PC-3 (cell line): ENCODE measurements at regions of chr9 and their contacts with region 1.

Region 1: GRCh38 chr9:5510360-5510931 is at the start of gene PDCD1LG2:
- DNase-seq: peak; percentile 69
- ATAC-seq: peak; percentile 55
- H3K4me3 ChIP-seq: peak within 1 kb of the TSS; percentile 59
- H3K27ac ChIP-seq: peak within 1 kb of the TSS; percentile 91
- H3K4me1 ChIP-seq: peaks cover 41% of the 10 kb centered on the region
- H3K27me3 ChIP-seq: no peaks in the 10 kb centered on the region
- CTCF ChIP-seq: no peak
- total RNA-seq, gene PDCD1LG2: 0.46 and 1.4 TPM in 2 replicates

Region 2: GRCh38 chr9:4832786-4833579 is 677.5 kb before region 1 on chr9:
- CTCF ChIA-PET with region 1: no interaction called
- POLR2A ChIA-PET with region 1: no interaction called
- intact Hi-C with region 1: no loop called
- DNase-seq: peak; percentile 96
- ATAC-seq: peak; percentile 85
- H3K4me3 ChIP-seq: 0 out of 2 replicates have a peak overlapping the region, but pooled peaks have one; percentile 2
- H3K27ac ChIP-seq: peak overlapping the region; percentile 97
- H3K4me1 ChIP-seq: peaks cover 78% of the 10 kb centered on the region
- H3K27me3 ChIP-seq: no peaks in the 10 kb centered on the region
- CTCF ChIP-seq: no peak

Region 3: DNA sequence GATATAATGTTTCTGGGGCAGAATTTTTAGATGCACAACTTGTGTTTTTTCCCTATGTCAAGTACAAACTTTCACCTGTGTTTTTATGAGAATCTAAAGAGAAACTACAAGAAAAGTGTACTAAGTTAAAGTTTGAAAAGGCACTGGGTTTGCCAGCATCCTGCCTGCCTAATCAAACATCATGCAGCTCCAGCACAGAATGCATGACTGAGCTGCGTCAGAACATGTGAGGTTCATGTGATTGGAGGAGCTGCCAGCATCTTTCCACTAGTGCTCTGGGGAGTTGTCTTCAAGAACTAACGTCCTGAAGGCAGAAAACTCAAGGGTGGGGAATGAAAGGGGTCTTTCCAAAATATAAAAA is 72.4 kb after region 1 on chr9:
- CTCF ChIA-PET with region 1: no interaction called
- POLR2A ChIA-PET with region 1: no interaction called
- intact Hi-C with region 1: loop called (anchors 2 kb)
- DNase-seq: no peak
- ATAC-seq: peak; percentile 42
- H3K4me3 ChIP-seq: no peak overlapping the region
- H3K27ac ChIP-seq: peak overlapping the region; percentile 28
- H3K4me1 ChIP-seq: peaks cover 34% of the 10 kb centered on the region
- H3K27me3 ChIP-seq: no peaks in the 10 kb centered on the region
- CTCF ChIP-seq: no peak